ENCODE measurements at regions of chr12 and their contacts with region 1.

Region 1: GRCh38 chr12:110431957-110432587 is 18.1 kb downstream of the ARPC3 start:
- DNase-seq: peak; percentile 57
- H3K4me3 Mint-ChIP-seq: no peak overlapping the region
- H3K27ac Mint-ChIP-seq: no peak overlapping the region
- H3K4me1 Mint-ChIP-seq: peaks cover 10% of the 10 kb centered on the region
- H3K27me3 Mint-ChIP-seq: no peaks in the 10 kb centered on the region

Region 2: GRCh38 chr12:110100315-110100970 is 331.6 kb before region 1 on chr12:
- CTCF ChIA-PET with region 1: interaction called, 71 read pairs
- POLR2A ChIA-PET with region 1: no interaction called
- intact Hi-C with region 1: loop called (anchors 1 kb)
- DNase-seq: peak; percentile 70
- H3K4me3 Mint-ChIP-seq: no peak overlapping the region
- H3K27ac Mint-ChIP-seq: peak overlapping the region; percentile 0
- H3K4me1 Mint-ChIP-seq: peaks cover 7% of the 10 kb centered on the region
- H3K27me3 Mint-ChIP-seq: no peaks in the 10 kb centered on the region

Region 3: DNA sequence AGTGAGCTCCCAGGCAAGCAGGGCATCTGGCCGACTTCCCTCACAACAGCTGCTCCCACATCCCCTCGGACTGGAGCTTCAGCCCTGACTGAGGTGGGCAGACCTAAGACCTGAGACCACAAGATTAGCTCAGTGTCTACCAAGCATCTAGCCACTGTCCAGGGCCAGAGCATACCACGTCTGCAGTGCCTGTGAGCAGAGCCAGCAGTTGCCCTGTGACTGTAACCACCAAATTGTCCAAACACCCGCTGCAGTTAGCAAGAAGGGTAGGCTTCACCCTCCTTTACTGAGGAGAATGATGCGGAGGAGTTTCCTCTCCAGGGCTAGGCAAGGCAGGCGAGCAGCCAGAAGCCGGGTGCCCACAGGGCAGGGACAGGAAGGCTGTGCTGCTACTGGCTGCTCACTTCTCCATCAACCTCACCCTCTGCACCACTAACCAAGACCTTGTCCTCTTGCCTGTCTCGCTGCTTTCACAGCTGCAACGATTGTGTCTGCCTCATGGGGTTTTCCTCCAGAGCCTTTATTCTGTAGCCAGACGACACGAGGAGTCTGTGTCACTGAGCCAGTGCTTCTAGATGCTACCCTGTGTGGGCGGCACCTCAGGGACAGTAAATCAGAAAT is 82.4 kb before region 1 on chr12:
- CTCF ChIA-PET with region 1: interaction called, 29 read pairs
- POLR2A ChIA-PET with region 1: no interaction called
- intact Hi-C with region 1: no loop called
- DNase-seq: peak; percentile 69
- H3K4me3 Mint-ChIP-seq: no peak overlapping the region
- H3K27ac Mint-ChIP-seq: peak overlapping the region; percentile 60
- H3K4me1 Mint-ChIP-seq: peaks cover 29% of the 10 kb centered on the region
- H3K27me3 Mint-ChIP-seq: no peaks in the 10 kb centered on the region

Region 4: GRCh38 chr12:110373025-110373424 is 59.0 kb before region 1 on chr12:
- CTCF ChIA-PET with region 1: interaction called, 10 read pairs
- POLR2A ChIA-PET with region 1: interaction called, 5 read pairs
- intact Hi-C with region 1: no loop called
- DNase-seq: no peak
- H3K4me3 Mint-ChIP-seq: no peak overlapping the region
- H3K27ac Mint-ChIP-seq: no peak overlapping the region
- H3K4me1 Mint-ChIP-seq: no peaks in the 10 kb centered on the region
- H3K27me3 Mint-ChIP-seq: no peaks in the 10 kb centered on the region

Region 5: DNA sequence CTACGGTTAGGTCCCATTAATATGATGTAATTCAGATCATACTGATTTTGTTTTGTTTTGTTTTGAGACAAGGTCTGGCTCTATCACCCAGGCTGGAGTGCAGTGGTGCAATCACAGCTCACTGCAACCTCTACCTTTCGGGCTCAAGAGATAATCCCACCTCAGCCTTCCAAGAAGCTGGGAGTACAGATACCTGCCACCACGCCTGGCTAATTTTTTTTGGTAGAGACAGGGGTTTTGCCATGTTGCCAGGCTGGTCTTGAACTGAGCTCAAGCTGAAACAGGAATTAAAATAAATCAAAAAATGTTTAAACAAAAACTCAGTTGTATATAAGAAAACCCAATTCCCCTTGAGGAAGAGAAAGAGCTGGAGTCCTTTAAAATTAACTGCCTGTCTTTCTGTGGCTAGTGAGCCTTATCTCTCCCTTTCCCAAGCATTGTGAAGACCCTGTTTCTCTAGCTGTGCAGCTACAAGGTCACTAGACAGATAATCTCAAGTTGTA is 10.9 kb before region 1 on chr12:
- CTCF ChIA-PET with region 1: interaction called, 11 read pairs
- POLR2A ChIA-PET with region 1: no interaction called
- intact Hi-C with region 1: no loop called
- DNase-seq: no peak
- H3K4me3 Mint-ChIP-seq: no peak overlapping the region
- H3K27ac Mint-ChIP-seq: no peak overlapping the region
- H3K4me1 Mint-ChIP-seq: no peaks in the 10 kb centered on the region
- H3K27me3 Mint-ChIP-seq: no peaks in the 10 kb centered on the region

Region 6: DNA sequence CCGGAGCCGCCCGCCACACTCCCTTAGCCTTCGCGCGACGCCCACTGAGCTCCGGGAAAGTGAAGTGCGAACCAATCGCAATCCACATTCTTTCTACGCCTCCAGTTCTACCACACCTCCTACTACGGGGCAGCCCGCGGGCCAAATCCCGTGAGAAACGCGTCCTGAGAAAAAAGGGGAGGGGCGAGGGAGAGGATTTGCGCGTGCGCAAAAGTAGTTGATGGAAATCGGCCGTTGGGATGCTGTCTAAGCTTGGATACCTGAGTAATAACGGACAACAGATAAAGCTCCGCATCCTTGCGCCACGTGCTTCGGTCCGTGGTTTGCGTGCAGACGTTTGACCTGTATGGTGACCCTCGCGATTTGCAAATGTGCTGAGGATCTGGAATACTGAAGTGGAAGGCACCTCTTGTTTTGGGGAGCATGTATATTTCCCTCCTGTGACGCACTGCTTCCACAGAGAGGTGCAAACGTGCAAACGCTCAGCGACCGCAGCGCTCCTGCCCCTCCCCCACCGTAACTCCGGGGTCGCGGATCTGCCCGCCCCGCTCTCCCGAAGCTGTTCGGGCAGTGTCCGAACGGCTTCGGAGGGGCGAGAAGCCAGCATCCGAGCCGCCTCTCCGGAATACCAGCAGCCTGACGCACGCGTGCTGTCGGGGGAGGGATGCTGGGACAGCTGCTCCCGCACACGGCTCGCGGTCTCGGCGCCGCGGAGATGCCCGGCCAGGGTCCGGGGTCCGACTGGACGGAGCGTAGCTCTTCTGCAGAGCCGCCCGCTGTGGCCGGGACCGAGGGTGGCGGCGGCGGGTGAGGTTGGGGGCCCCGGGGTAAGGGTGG is 36.4 kb after region 1 on chr12 and contains the starts of genes FAM216A and GPN3:
- CTCF ChIA-PET with region 1: interaction called, 20 read pairs
- POLR2A ChIA-PET with region 1: interaction called, 5 read pairs
- intact Hi-C with region 1: no loop called
- DNase-seq: peak; percentile 98
- H3K4me3 Mint-ChIP-seq: peak within 1 kb of the TSS; percentile 98
- H3K27ac Mint-ChIP-seq: peak within 1 kb of the TSS; percentile 97
- H3K4me1 Mint-ChIP-seq: peaks cover 28% of the 10 kb centered on the region
- H3K27me3 Mint-ChIP-seq: no peaks in the 10 kb centered on the region
- total RNA-seq, gene FAM216A: 29.8 to 30.0 TPM
- total RNA-seq, gene GPN3: 62.4 to 68.4 TPM

Region 7: GRCh38 chr12:110689281-110690126 is 257.4 kb after region 1 on chr12:
- CTCF ChIA-PET with region 1: no interaction called
- POLR2A ChIA-PET with region 1: no interaction called
- intact Hi-C with region 1: no loop called
- DNase-seq: peak; percentile 65
- H3K4me3 Mint-ChIP-seq: peak overlapping the region; percentile 76
- H3K27ac Mint-ChIP-seq: peak overlapping the region; percentile 61
- H3K4me1 Mint-ChIP-seq: peaks cover 23% of the 10 kb centered on the region
- H3K27me3 Mint-ChIP-seq: no peaks in the 10 kb centered on the region